GM12878 (cell line): ENCODE measurements at regions of chr2 and their contacts with region 1.

Region 1: GRCh38 chr2:61878756-61879155 is 9.7 kb downstream of the CCT4 start:
- DNase-seq: no peak
- ATAC-seq: no peak
- H3K4me3 ChIP-seq: no peak overlapping the region
- H3K27ac ChIP-seq: no peak overlapping the region
- H3K4me1 ChIP-seq: no peaks in the 10 kb centered on the region
- H3K27me3 ChIP-seq: no peaks in the 10 kb centered on the region
- CTCF ChIP-seq: no peak
- EP300 ChIP-seq: no peak
- POLR2A ChIP-seq: no peak
- RAD21 ChIP-seq: no peak

Region 2: GRCh38 chr2:61493523-61493942 is 385.2 kb before region 1 on chr2:
- CTCF ChIA-PET with region 1: no interaction called
- POLR2A ChIA-PET with region 1: no interaction called
- RAD21 ChIA-PET with region 1: no interaction called
- SMC1A ChIA-PET with region 1: no interaction called
- in situ Hi-C with region 1: no loop called
- intact Hi-C with region 1: loop called (anchors 10 kb)
- DNase-seq: no peak
- ATAC-seq: no peak; the same call in 1 of the 3 replicates
- H3K4me3 ChIP-seq: no peak overlapping the region
- H3K27ac ChIP-seq: no peak overlapping the region; the same call in 1 of the 2 replicates
- H3K4me1 ChIP-seq: no peaks in the 10 kb centered on the region
- H3K27me3 ChIP-seq: no peaks in the 10 kb centered on the region
- CTCF ChIP-seq: no peak
- EP300 ChIP-seq: no peak
- POLR2A ChIP-seq: no peak
- RAD21 ChIP-seq: no peak

Region 3: GRCh38 chr2:62000538-62000937 is 121.8 kb after region 1 on chr2:
- CTCF ChIA-PET with region 1: no interaction called
- POLR2A ChIA-PET with region 1: no interaction called
- RAD21 ChIA-PET with region 1: no interaction called
- SMC1A ChIA-PET with region 1: no interaction called
- in situ Hi-C with region 1: no loop called
- intact Hi-C with region 1: no loop called
- DNase-seq: no peak
- ATAC-seq: no peak
- H3K4me3 ChIP-seq: no peak overlapping the region
- H3K27ac ChIP-seq: no peak overlapping the region
- H3K4me1 ChIP-seq: peaks cover 10% of the 10 kb centered on the region; the same call in 1 of the 2 replicates
- H3K27me3 ChIP-seq: no peaks in the 10 kb centered on the region
- CTCF ChIP-seq: no peak
- EP300 ChIP-seq: no peak
- POLR2A ChIP-seq: no peak
- RAD21 ChIP-seq: peak; percentile 25; the same call in 1 of the 2 replicates